Cardiac septum (tissue), 1 donor: ENCODE measurements at regions of chr2 and their contacts with region 1.

Region 1: DNA sequence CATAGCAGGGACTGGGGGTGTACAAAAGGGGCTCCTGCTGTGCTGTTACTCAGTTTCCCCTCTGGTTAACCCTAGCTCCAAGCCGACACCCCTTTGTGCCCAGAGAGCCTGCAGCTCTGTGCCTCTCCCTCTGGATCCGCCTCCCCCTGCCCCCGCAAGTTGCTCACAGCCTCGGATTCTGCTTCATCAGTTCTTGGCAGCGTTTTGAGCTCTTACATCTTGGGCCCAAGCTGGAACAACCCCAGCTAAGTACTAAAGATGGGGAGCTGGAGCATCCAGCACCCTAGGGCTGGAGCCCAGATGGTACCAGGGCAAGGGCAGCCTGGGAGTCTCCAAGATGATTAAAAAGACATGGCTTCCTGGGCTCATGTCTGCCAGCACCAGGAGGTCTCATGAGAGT is 40.7 kb downstream of the POMC start:
- DNase-seq: no peak

Region 2: GRCh38 chr2:24971536-24972314 is 155.9 kb before region 1 on chr2 and contains the start of gene DNAJC27:
- intact Hi-C with region 1: loop called (anchors 1 kb)
- DNase-seq: peak; percentile 100
- total RNA-seq, gene DNAJC27: 11.2 TPM

Region 3: DNA sequence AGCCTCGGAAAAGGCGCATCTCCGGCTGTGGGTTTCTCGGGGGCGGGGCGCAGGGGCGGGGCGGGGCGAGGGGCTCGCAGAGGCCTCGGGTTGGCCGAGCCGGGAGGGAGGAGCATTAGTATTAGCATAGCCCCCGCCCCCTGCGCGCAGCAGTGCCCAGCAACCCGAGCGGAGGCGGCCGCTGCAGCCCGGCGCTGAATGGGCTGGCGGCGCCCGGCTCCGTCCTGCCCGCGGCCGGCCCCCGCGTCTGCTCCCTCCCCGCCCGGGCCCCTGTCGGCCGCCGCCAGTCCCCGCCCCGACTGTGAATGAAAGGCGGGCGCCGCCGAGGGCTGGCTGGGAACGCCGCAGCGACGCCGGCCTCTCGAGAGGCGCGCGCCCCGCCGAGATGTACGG is 85.7 kb before region 1 on chr2 and contains the start of gene EFR3B:
- intact Hi-C with region 1: loop called (anchors 5 kb)
- DNase-seq: peak; percentile 97
- total RNA-seq, gene EFR3B: 8.9 TPM

Region 4: GRCh38 chr2:25078171-25079049 is 49.2 kb before region 1 on chr2:
- intact Hi-C with region 1: loop called (anchors 5 kb)
- DNase-seq: no peak

Region 5: DNA sequence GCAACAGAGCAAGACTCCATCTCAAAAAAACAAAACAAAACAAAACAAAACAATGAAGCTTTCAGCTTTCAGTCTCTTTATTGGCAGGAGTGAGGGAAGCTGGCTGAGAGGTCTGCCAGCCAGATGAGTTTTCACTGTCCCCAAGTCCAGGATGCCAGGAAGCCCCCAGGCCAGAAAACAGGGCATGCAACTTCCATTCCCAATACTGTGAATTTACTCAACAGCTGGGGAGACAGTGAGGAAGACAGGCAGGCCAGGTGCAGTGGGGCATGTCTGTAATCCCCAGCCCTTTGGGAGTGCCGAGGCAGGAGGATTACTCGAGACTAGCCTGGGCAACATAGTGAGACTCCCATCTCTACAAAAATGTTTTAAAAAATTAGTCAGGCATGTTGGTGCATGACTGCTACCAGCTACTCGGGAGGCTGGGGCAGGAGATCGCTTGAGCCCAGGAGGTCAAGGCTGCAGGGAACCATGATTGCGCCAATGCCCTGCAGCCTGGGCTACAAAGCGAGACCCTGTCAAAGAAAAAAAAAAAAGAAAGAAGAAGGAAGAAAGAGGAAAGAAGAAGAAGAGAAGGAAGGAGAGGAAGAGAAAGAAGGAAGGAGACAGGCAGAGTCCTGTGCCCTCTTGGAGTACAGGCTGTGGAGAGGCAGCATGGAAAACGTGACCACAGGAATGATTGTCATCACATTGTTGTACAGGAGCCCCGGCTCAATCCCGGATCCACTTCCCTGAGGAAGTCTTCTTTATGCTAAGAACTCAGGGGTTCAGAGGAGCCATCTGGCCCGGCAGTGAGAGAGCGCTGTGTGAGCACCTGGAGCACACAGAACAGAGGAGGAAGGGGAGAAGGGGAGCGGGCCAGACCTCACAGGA is 69.9 kb after region 1 on chr2:
- intact Hi-C with region 1: loop called (anchors 2 kb)
- DNase-seq: no peak